AG04450 (cell line): ENCODE measurements at regions of chr4 and their contacts with region 1.

Region 1: GRCh38 chr4:173013232-173013930 is 155.2 kb upstream of the GALNT7 start:
- DNase-seq: no peak
- H3K4me3 ChIP-seq: no peak overlapping the region
- H3K27ac ChIP-seq: no peak overlapping the region
- H3K27me3 ChIP-seq: no peaks in the 10 kb centered on the region
- CTCF ChIP-seq: peak; percentile 67

Region 2: DNA sequence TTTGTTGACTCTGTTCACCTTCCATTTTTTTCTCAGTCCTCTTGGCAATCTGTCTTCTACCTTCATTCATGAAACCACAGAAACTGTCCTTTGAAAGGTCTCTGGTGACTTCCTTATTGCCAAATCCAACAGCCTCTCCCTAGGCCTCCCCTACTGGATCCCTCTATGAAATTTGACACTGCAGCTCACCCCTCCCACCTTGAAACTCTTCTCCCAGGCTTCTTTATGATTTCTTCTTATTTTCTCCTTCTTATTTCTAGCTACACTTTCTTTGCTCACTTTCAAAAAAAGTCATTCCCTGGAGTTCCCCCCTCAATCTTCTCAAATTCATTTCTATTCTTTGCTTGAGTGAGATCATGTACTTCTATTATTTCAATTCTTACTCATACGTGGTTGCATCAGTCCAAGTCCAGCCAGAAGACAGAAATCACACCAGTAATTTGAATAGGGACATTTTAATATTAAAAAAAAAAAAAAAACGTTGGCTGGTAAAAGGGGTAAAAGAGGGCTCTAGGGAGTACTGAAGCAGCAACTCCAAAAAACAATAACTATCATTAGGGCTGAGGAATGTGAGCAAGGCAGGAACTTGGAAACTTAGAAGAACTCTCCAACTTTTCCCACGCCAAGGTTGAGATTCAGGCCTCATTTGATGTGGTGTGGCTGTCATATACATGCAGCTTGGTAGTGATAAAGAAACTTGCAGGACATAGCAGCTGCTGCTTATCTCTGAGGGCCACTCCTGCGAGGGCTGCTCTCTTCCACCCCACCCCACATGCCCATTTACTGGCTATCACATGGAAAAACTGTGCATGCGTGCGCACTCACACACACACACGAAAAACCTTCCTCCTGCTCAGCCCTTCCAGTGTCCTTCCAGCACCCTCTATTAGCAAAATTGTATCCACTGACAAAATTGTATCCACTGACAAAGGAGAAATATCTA is 14.6 kb before region 1 on chr4:
- CTCF ChIA-PET with region 1: interaction called, 30 read pairs
- POLR2A ChIA-PET with region 1: no interaction called
- DNase-seq: no peak
- H3K4me3 ChIP-seq: no peak overlapping the region
- H3K27ac ChIP-seq: peak overlapping the region; percentile 47
- H3K27me3 ChIP-seq: no peaks in the 10 kb centered on the region
- CTCF ChIP-seq: no peak

Region 3: GRCh38 chr4:173195109-173195973 is 182.0 kb after region 1 on chr4:
- CTCF ChIA-PET with region 1: interaction called, 12 read pairs
- POLR2A ChIA-PET with region 1: no interaction called
- DNase-seq: no peak
- H3K4me3 ChIP-seq: no peak overlapping the region
- H3K27ac ChIP-seq: no peak overlapping the region
- H3K27me3 ChIP-seq: no peaks in the 10 kb centered on the region
- CTCF ChIP-seq: no peak

Region 4: GRCh38 chr4:173252024-173252935 is 238.9 kb after region 1 on chr4:
- CTCF ChIA-PET with region 1: interaction called, 334 read pairs
- POLR2A ChIA-PET with region 1: interaction called, 5 read pairs
- DNase-seq: peak; percentile 98
- H3K4me3 ChIP-seq: no peak overlapping the region
- H3K27ac ChIP-seq: peak overlapping the region; percentile 53
- H3K27me3 ChIP-seq: no peaks in the 10 kb centered on the region
- CTCF ChIP-seq: no peak

Region 5: DNA sequence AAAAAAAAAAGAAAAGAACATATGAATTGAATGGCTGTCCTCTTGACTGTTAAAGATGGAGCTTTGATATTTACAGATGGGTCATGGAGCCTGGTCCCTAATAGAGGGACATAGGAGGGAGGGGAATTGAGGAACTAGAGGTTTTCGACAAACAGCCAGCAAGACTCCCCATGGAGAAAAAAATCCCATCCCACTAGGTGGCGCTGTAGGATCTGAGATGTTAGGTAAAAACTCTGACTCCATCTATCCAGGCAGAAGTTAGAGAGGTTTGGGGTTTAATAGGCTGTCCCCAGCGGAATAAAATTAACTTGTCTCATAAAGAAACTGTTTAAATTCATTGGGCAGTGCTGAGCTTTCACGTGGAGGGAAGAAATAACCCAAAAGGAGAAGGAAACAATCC is 274.9 kb after region 1 on chr4:
- CTCF ChIA-PET with region 1: interaction called, 14 read pairs
- POLR2A ChIA-PET with region 1: no interaction called
- DNase-seq: peak; percentile 6
- H3K4me3 ChIP-seq: no peak overlapping the region
- H3K27ac ChIP-seq: no peak overlapping the region
- H3K27me3 ChIP-seq: no peaks in the 10 kb centered on the region
- CTCF ChIP-seq: peak; percentile 52

Region 6: GRCh38 chr4:173318648-173319211 is 305.3 kb after region 1 on chr4:
- CTCF ChIA-PET with region 1: interaction called, 21 read pairs
- POLR2A ChIA-PET with region 1: no interaction called
- DNase-seq: no peak
- H3K4me3 ChIP-seq: no peak overlapping the region
- H3K27ac ChIP-seq: no peak overlapping the region
- H3K27me3 ChIP-seq: no peaks in the 10 kb centered on the region
- CTCF ChIP-seq: peak; percentile 27; the same call in 1 of the 2 replicates